ENCODE measurements at regions of chr14 and their contacts with region 1.

Region 1: GRCh38 chr14:20855652-20856291 is 35.4 kb upstream of the RNASE3 start:
- DNase-seq: peak; percentile 75
- H3K4me3 Mint-ChIP-seq: no peak overlapping the region
- H3K27ac Mint-ChIP-seq: no peak overlapping the region
- H3K4me1 Mint-ChIP-seq: peaks cover 5% of the 10 kb centered on the region
- H3K27me3 Mint-ChIP-seq: peaks cover 47% of the 10 kb centered on the region
- CTCF ChIP-seq: peak; percentile 68

Region 2: GRCh38 chr14:20690848-20691523 is 164.8 kb before region 1 on chr14:
- CTCF ChIA-PET with region 1: interaction called, 121 read pairs
- POLR2A ChIA-PET with region 1: interaction called, 4 read pairs
- intact Hi-C with region 1: no loop called
- DNase-seq: peak; percentile 77
- H3K4me3 Mint-ChIP-seq: peak overlapping the region; percentile 47
- H3K27ac Mint-ChIP-seq: no peak overlapping the region
- H3K4me1 Mint-ChIP-seq: peaks cover 10% of the 10 kb centered on the region
- H3K27me3 Mint-ChIP-seq: no peaks in the 10 kb centered on the region
- CTCF ChIP-seq: peak; percentile 81

Region 3: GRCh38 chr14:20707622-20708021 is 148.2 kb before region 1 on chr14:
- CTCF ChIA-PET with region 1: interaction called, 16 read pairs
- POLR2A ChIA-PET with region 1: no interaction called
- intact Hi-C with region 1: no loop called
- DNase-seq: no peak
- H3K4me3 Mint-ChIP-seq: no peak overlapping the region
- H3K27ac Mint-ChIP-seq: no peak overlapping the region
- H3K4me1 Mint-ChIP-seq: no peaks in the 10 kb centered on the region
- H3K27me3 Mint-ChIP-seq: no peaks in the 10 kb centered on the region
- CTCF ChIP-seq: no peak

Region 4: DNA sequence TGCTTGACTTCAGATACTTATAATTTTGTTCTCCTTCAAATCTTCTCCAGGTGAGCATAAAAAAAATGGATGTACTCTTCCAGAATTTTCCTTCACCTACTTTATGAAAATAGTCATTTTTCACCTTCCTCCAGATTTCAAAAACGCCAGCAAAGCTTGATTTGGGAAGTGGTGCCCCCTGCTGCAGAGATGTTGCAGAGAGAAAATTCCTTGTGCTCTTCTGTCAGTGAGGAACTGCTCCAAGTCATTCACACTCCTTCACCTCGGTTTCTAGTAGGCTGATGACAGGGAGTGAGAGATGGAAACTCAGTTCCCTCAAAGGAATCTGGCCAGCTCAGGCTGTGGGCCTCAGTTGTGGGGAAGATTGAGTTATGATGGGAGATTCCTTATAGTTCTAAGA is 11.2 kb after region 1 on chr14:
- CTCF ChIA-PET with region 1: interaction called, 18 read pairs
- POLR2A ChIA-PET with region 1: no interaction called
- intact Hi-C with region 1: no loop called
- DNase-seq: peak; percentile 24
- H3K4me3 Mint-ChIP-seq: no peak overlapping the region
- H3K27ac Mint-ChIP-seq: no peak overlapping the region
- H3K4me1 Mint-ChIP-seq: no peaks in the 10 kb centered on the region
- H3K27me3 Mint-ChIP-seq: peaks cover 87% of the 10 kb centered on the region
- CTCF ChIP-seq: peak; percentile 24

Region 5: GRCh38 chr14:20982646-20983369 is 127.0 kb after region 1 on chr14:
- CTCF ChIA-PET with region 1: interaction called, 14 read pairs
- POLR2A ChIA-PET with region 1: no interaction called
- intact Hi-C with region 1: no loop called
- DNase-seq: no peak
- H3K4me3 Mint-ChIP-seq: no peak overlapping the region
- H3K27ac Mint-ChIP-seq: no peak overlapping the region
- H3K4me1 Mint-ChIP-seq: peaks cover 18% of the 10 kb centered on the region
- H3K27me3 Mint-ChIP-seq: no peaks in the 10 kb centered on the region
- CTCF ChIP-seq: no peak

Region 6: DNA sequence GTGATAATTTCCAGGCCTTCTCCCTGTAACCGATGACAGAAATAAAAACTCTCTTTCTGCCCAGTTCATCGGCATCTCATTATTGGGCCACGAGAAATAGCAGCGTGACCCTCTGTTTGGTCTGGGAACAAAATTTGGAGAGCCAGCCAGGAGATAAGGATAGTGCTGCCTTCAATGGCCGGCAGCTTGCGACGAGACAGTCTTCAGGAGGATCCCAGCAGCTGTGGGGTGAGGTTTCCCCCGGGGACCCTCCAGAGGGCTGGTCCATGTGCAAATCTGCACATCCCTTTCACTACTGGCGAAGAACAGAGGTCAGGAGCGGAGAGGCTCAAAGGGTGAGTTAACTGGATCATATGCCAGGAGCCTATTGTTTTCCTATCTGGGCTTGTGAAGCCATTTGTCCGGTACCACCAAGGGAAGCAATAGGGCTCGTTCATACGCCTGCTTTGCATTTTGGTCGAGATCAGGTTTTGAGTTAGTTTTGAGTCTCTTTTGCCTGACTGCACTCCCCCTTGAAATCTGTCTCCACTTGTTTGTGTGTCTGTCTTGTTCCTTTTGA is 148.1 kb after region 1 on chr14:
- CTCF ChIA-PET with region 1: interaction called, 28 read pairs
- POLR2A ChIA-PET with region 1: no interaction called
- intact Hi-C with region 1: no loop called
- DNase-seq: no peak
- H3K4me3 Mint-ChIP-seq: no peak overlapping the region
- H3K27ac Mint-ChIP-seq: no peak overlapping the region
- H3K4me1 Mint-ChIP-seq: peaks cover 4% of the 10 kb centered on the region
- H3K27me3 Mint-ChIP-seq: no peaks in the 10 kb centered on the region
- CTCF ChIP-seq: no peak

Region 7: DNA sequence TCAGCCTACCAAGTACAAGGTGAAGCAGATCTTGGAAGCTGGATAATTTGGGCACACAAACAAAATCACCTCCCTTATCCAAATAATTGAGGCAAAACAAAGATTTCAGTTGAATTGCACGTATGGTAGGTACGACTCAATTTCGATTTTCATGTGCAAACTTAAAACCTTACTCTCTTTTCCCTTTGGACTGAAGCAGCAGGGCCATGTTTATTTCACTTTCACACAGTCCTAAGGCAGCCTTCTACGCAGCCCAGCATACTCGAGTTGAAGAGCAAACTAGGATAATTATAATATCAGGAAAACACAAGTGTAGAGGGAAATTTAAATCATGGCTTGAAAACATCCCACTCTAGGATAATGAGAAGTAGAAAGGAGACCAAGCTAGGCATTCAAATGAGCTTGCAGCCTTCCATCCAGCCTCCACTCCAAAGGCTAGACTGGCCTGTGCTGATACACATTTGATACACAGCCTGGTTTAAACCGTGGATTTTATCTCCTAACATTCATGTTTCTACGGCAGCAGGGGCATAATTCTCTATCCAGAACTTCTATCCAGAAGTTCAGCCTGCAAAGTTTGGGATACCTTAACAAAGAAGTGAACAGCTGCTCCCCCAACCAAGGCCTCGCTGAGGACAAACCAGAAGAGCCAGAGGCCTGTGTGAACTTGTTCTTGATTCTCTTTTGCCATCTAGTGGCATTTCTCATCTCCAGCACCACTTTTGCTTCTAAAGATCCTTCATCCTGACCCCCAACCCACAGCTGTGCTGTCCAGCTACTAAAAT is 184.0 kb after region 1 on chr14:
- CTCF ChIA-PET with region 1: interaction called, 60 read pairs
- POLR2A ChIA-PET with region 1: interaction called, 4 read pairs
- intact Hi-C with region 1: loop called (anchors 1 kb)
- DNase-seq: peak; percentile 69
- H3K4me3 Mint-ChIP-seq: no peak overlapping the region
- H3K27ac Mint-ChIP-seq: no peak overlapping the region
- H3K4me1 Mint-ChIP-seq: peaks cover 34% of the 10 kb centered on the region
- H3K27me3 Mint-ChIP-seq: no peaks in the 10 kb centered on the region
- CTCF ChIP-seq: peak; percentile 51

Region 8: DNA sequence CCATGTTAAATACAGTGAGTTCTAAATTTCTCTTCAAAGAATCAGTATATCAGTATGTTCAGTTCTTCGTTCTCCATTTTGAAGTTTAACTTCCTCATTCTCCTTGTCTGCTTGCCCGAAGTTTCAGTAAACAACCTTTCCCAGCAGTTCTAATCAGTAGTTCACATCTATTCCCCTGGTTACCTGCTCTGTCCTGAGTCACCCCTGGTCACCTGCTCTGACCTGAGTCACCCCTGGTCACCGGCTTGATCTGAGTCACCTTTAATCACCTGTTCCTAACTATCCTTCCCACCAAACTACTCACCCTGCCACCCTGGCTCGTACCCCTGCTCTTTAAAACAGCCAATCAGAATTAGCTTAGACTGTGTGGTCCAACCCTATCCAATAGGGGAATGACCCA is 733.5 kb after region 1 on chr14:
- CTCF ChIA-PET with region 1: no interaction called
- POLR2A ChIA-PET with region 1: no interaction called
- intact Hi-C with region 1: no loop called
- DNase-seq: no peak
- H3K4me3 Mint-ChIP-seq: no peak overlapping the region
- H3K27ac Mint-ChIP-seq: no peak overlapping the region
- H3K4me1 Mint-ChIP-seq: no peaks in the 10 kb centered on the region
- H3K27me3 Mint-ChIP-seq: peaks cover 13% of the 10 kb centered on the region
- CTCF ChIP-seq: no peak

Measured in MCF 10A (cell line).